Vagina (tissue), 2 donors: ENCODE measurements at regions of chr2 and their contacts with region 1.

Region 1: DNA sequence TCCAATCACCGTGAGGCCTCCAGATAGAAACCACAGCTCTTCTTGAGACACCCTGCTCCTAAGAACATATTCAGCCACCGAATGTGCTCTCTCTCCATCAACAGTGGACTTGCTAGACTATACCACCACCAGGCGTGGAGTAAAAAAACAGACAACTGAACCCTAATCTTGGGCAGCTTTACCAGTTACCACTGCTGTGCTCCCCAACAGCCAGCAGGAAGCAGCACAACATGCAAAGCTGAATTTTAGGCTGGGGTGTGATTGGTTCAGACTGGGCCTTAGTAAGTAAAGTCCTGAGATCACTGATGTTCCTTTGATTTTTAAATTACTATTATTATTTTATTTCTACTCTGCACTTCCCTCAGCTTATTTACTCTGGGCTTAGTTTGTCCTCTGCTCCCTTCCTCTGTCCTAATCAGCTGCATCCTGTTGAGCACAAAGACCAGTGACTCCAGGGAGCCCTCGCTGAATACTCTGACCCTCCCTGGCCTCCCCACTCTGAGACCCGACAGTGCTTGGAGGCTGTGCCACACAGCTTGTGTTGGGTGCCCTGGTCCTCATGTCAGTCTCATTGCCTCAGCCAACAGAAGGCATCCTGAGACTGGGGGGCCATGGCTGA is 21.9 kb downstream of the MRPL35 start:
- DNase-seq: peak in 1 of 2 donors; percentile 61
- H3K4me3 ChIP-seq: no peak overlapping the region
- H3K27ac ChIP-seq: peak overlapping the region; percentile 88
- H3K4me1 ChIP-seq: peaks cover 32% of the 10 kb centered on the region
- H3K27me3 ChIP-seq: no peaks in the 10 kb centered on the region
- CTCF ChIP-seq: peak; percentile 57 to 69 (median 68)
- POLR2A ChIP-seq: no peak

Region 2: GRCh38 chr2:86280191-86280667 is 59.1 kb after region 1 on chr2:
- intact Hi-C with region 1: loop called (anchors 10 kb)
- DNase-seq: no peak
- H3K4me3 ChIP-seq: no peak overlapping the region
- H3K27ac ChIP-seq: no peak overlapping the region
- H3K4me1 ChIP-seq: no peaks in the 10 kb centered on the region
- H3K27me3 ChIP-seq: no peaks in the 10 kb centered on the region
- CTCF ChIP-seq: no peak
- POLR2A ChIP-seq: no peak

Region 3: DNA sequence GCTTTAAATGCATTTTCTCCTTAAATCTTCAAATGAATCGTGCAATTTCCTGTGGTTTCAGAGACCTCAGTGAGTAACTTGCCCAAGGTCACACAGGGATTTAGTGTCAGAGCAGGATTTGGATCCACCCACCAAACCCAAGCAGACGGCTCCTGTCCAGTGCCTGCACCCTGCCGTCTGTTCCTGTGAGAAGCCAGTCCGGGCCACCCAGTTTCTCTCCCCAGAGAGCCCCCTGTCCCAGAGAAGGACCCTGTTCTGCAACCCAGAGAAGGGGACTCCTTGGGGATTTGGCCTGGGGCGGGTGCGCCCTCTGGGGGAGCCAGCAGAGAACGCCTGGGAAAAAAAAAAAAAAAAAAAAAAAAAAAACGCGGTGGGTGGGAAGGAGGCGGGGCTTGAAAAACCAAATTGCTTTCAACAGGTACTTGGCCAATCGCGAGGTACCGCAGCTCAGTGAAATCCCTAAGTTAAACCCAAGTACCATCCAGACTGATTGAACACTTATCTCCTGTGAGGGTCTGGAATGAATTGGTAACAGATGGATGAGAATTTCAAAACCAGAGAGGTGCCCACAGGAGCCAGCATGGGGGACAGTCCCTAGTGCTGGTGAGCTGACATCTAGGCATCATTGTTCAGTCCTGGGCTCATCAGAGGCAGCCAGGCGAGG is 147.1 kb after region 1 on chr2:
- intact Hi-C with region 1: loop called (anchors 5 kb)
- DNase-seq: no peak
- H3K4me3 ChIP-seq: no peak overlapping the region
- H3K27ac ChIP-seq: no peak overlapping the region
- H3K4me1 ChIP-seq: peaks cover 7% of the 10 kb centered on the region
- H3K27me3 ChIP-seq: no peaks in the 10 kb centered on the region
- CTCF ChIP-seq: no peak
- POLR2A ChIP-seq: no peak

Region 4: GRCh38 chr2:86440631-86441391 is 219.6 kb after region 1 on chr2 and contains the start of gene KDM3A:
- intact Hi-C with region 1: loop called (anchors 10 kb)
- DNase-seq: peak; percentile 99 to 100
- H3K4me3 ChIP-seq: peak within 1 kb of the TSS; percentile 80 to 90
- H3K27ac ChIP-seq: peak within 1 kb of the TSS; percentile 96
- H3K4me1 ChIP-seq: peaks cover 33% of the 10 kb centered on the region
- H3K27me3 ChIP-seq: no peaks in the 10 kb centered on the region
- CTCF ChIP-seq: no peak
- POLR2A ChIP-seq: no peak
- total RNA-seq, gene KDM3A: 38.3 TPM